ENCODE measurements at regions of chr9 and their contacts with region 1.

Region 1: DNA sequence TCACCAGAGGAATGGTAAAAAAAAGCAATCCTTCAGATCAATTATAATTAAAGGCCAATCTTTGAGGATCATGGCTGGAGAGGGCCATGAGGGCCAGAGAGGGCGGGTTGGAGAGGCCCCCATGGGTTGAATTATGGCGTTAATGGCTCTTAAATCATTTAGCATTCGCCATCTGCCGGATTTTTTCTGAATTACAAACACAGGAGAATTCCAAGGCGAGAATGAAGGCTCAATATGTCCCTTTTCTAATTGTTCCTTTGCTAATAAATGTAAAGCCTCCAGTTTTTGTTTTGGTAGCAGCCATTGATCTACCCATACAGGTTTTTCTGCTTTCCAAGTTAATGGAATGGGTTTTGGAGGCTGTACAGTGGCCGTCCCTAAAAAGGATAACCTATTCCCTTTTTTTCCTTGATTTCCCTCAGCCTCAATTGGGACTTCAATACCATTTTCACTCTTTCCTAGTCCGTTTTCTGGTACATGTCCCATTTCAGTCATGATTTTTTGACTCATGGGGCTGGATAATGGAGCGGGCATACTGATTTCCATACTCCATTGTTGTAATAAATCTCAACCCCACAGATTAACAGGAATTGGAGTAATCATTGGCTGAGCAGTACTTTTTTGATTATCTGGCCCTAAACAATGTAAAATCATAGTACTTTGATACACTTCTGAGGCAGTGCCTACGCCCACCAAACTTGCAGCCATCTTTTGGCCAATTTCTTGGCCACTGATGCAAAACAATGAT is 6.7 kb upstream of the TMEM141 start:
- DNase-seq: no peak
- H3K4me3 ChIP-seq: no peak overlapping the region
- H3K27ac ChIP-seq: peak overlapping the region in 45 of 59 donors; percentile 7 to 99 (median 71)
- H3K27me3 ChIP-seq: no peaks in the 10 kb centered on the region
- CTCF ChIP-seq: peak; percentile 42 to 83 (median 64)

Region 2: GRCh38 chr9:136769710-136770191 is 14.7 kb before region 1 on chr9:
- intact Hi-C with region 1: loop called in 1 of 2 experiments (anchors 2 kb)
- DNase-seq: peak in 4 of 10 donors; percentile 35 to 54 (median 44)
- H3K4me3 ChIP-seq: peak overlapping the region in 37 of 59 donors; percentile 21 to 64 (median 38)
- H3K27ac ChIP-seq: peak overlapping the region in 1 of 59 donors; percentile 25
- H3K27me3 ChIP-seq: no peaks in the 10 kb centered on the region
- CTCF ChIP-seq: peak in 53 of 56 donors; percentile 22 to 61 (median 45)